BJ (cell line): ENCODE measurements at regions of chr6 and their contacts with region 1.

Region 1: DNA sequence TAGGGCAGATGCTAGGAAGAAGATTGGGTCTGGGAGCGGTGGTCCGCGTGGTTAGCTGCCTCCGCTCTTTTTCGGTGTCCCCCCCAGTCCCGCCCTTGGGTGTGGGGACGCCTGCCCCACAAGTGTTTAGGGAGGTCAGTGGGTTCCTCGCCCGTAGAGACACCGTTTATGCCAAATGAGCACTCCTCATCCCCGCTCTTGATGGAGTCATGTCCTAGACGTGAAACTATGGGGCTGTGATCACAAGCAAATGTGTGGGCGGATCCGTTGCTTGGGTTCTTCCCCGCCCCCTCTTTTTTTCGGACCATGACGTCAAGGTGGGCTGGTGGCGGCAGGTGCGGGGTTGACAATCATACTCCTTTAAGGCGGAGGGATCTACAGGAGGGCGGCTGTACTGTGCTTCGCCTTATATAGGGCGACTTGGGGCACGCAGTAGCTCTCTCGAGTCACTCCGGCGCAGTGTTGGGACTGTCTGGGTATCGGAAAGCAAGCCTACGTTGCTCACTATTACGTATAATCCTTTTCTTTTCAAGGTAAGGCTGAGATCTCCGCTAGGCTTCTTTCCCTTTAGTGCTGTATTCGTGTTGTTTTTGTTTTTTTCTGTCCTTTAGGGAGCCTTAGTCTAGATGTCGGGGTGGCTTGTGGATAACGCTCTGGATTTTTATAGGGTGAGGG is at the start of gene HSP90AB1:
- DNase-seq: peak; percentile 87
- H3K4me3 ChIP-seq: peak within 1 kb of the TSS; percentile 79
- H3K27me3 ChIP-seq: no peaks in the 10 kb centered on the region
- CTCF ChIP-seq: no peak
- polyA plus RNA-seq, gene HSP90AB1: 578 and 615 TPM in 2 replicates

Region 2: GRCh38 chr6:44257025-44257752 is 10.4 kb after region 1 on chr6 and contains the start of gene SLC35B2:
- CTCF ChIA-PET with region 1: interaction called, 27 read pairs
- POLR2A ChIA-PET with region 1: interaction called, 18 read pairs
- DNase-seq: no peak
- H3K4me3 ChIP-seq: peak within 1 kb of the TSS; percentile 81
- H3K27me3 ChIP-seq: no peaks in the 10 kb centered on the region
- CTCF ChIP-seq: peak; percentile 41
- polyA plus RNA-seq, gene SLC35B2: 104 and 145 TPM in 2 replicates

Region 3: GRCh38 chr6:44522871-44523270 is 276.1 kb after region 1 on chr6:
- CTCF ChIA-PET with region 1: no interaction called
- POLR2A ChIA-PET with region 1: no interaction called
- DNase-seq: no peak
- H3K4me3 ChIP-seq: no peak overlapping the region
- H3K27me3 ChIP-seq: peaks cover 8% of the 10 kb centered on the region
- CTCF ChIP-seq: no peak